Mammary epithelial cell (primary cell): ENCODE measurements at regions of chr13 and their contacts with region 1.

Region 1: DNA sequence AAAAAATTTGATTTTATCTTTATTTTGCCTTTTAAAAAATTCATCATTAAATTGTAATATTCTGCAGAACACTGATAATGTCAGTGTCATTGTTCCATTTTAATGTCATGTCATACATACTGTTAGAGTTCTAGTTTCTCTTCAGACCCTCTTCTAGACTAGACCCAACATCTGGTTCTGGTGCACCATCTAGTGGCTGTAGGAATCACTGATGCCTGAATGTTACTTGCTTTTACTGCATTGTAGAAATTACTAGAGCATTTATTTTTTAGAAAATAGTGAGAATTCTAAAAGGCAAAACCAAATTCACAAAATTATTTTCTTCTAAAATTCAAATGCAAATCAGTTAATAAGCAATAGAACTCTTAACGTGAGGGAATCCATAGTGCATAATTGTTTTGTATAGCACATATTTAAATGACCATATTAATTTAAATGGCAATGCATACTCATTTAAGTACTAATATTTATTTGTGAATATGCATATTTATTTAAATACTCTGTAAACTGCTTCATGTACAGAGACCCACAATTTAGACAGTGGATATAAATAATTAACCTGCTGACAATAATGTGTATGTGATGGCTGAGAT is 425.7 kb downstream of the KLF12 start:
- DNase-seq: peak; percentile 63
- H3K4me3 ChIP-seq: no peak overlapping the region
- H3K27ac ChIP-seq: peak overlapping the region; percentile 42
- H3K4me1 ChIP-seq: no peaks in the 10 kb centered on the region
- H3K27me3 ChIP-seq: no peaks in the 10 kb centered on the region
- CTCF ChIP-seq: peak; percentile 87 to 93

Region 2: GRCh38 chr13:72839831-72840426 is 868.6 kb before region 1 on chr13:
- CTCF ChIA-PET with region 1: no interaction called
- dilution Hi-C with region 1: no loop called
- in situ Hi-C with region 1: loop called (anchors 10 kb)
- intact Hi-C with region 1: loop called (anchors 1 kb)
- DNase-seq: peak; percentile 69
- H3K4me3 ChIP-seq: no peak overlapping the region
- H3K27ac ChIP-seq: peak overlapping the region; percentile 26
- H3K4me1 ChIP-seq: no peaks in the 10 kb centered on the region
- H3K27me3 ChIP-seq: no peaks in the 10 kb centered on the region
- CTCF ChIP-seq: peak; percentile 79 to 86

Region 3: GRCh38 chr13:73081256-73081915 is 627.1 kb before region 1 on chr13:
- CTCF ChIA-PET with region 1: no interaction called
- dilution Hi-C with region 1: no loop called
- in situ Hi-C with region 1: loop called in 1 of 2 experiments (anchors 25 kb)
- intact Hi-C with region 1: loop called (anchors 2 kb)
- DNase-seq: peak; percentile 45
- H3K4me3 ChIP-seq: no peak overlapping the region
- H3K27ac ChIP-seq: peak overlapping the region; percentile 11
- H3K4me1 ChIP-seq: peaks cover 8% of the 10 kb centered on the region
- H3K27me3 ChIP-seq: no peaks in the 10 kb centered on the region
- CTCF ChIP-seq: no peak

Region 4: DNA sequence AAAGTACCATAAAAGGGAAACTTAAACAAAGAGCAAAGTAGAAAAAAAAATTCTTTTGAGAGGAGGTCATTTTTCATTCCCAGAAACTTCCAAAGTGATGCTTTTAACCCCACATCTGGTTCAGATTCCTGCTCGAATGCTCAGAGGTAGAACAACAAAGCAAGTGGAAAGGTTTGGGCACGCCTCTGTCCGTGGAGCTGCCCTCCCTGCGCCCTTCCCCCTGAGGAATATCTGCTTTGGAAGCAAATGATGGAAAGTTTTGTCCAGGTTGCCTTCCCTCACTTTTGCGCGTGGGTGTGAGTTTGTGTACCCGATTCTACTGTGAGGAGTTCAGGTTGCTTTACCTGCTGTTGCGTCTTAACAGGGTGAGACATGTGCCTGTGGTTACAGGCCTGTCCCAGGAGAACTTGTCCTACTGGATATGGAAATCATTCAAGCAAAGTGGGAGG is 539.5 kb before region 1 on chr13:
- CTCF ChIA-PET with region 1: no interaction called
- dilution Hi-C with region 1: no loop called
- in situ Hi-C with region 1: no loop called
- intact Hi-C with region 1: loop called (anchors 1 kb)
- DNase-seq: peak; percentile 94
- H3K4me3 ChIP-seq: no peak overlapping the region
- H3K27ac ChIP-seq: peak overlapping the region; percentile 98
- H3K4me1 ChIP-seq: peaks cover 50% of the 10 kb centered on the region
- H3K27me3 ChIP-seq: no peaks in the 10 kb centered on the region
- CTCF ChIP-seq: no peak

Region 5: GRCh38 chr13:73259061-73260017 is 449.1 kb before region 1 on chr13:
- CTCF ChIA-PET with region 1: no interaction called
- dilution Hi-C with region 1: no loop called
- in situ Hi-C with region 1: no loop called
- intact Hi-C with region 1: no loop called
- DNase-seq: no peak
- H3K4me3 ChIP-seq: no peak overlapping the region
- H3K27ac ChIP-seq: no peak overlapping the region
- H3K4me1 ChIP-seq: peaks cover 29% of the 10 kb centered on the region
- H3K27me3 ChIP-seq: no peaks in the 10 kb centered on the region
- CTCF ChIP-seq: no peak

Region 6: GRCh38 chr13:73428137-73428536 is 280.4 kb before region 1 on chr13:
- CTCF ChIA-PET with region 1: no interaction called
- dilution Hi-C with region 1: no loop called
- in situ Hi-C with region 1: loop called (anchors 10 to 25 kb)
- intact Hi-C with region 1: no loop called
- DNase-seq: peak; percentile 96
- H3K4me3 ChIP-seq: no peak overlapping the region
- H3K27ac ChIP-seq: peak overlapping the region; percentile 98
- H3K4me1 ChIP-seq: peaks cover 31% of the 10 kb centered on the region
- H3K27me3 ChIP-seq: no peaks in the 10 kb centered on the region
- CTCF ChIP-seq: no peak

Region 7: GRCh38 chr13:73492811-73493210 is 215.7 kb before region 1 on chr13:
- CTCF ChIA-PET with region 1: no interaction called
- dilution Hi-C with region 1: no loop called
- in situ Hi-C with region 1: no loop called
- intact Hi-C with region 1: loop called (anchors 5 kb)
- DNase-seq: peak; percentile 11
- H3K4me3 ChIP-seq: no peak overlapping the region
- H3K27ac ChIP-seq: no peak overlapping the region
- H3K4me1 ChIP-seq: peaks cover 14% of the 10 kb centered on the region
- H3K27me3 ChIP-seq: no peaks in the 10 kb centered on the region
- CTCF ChIP-seq: no peak

Region 8: GRCh38 chr13:73635166-73636080 is 73.1 kb before region 1 on chr13:
- CTCF ChIA-PET with region 1: no interaction called
- dilution Hi-C with region 1: no loop called
- in situ Hi-C with region 1: no loop called
- intact Hi-C with region 1: no loop called
- DNase-seq: no peak
- H3K4me3 ChIP-seq: no peak overlapping the region
- H3K27ac ChIP-seq: no peak overlapping the region
- H3K4me1 ChIP-seq: no peaks in the 10 kb centered on the region
- H3K27me3 ChIP-seq: no peaks in the 10 kb centered on the region
- CTCF ChIP-seq: no peak

Region 9: DNA sequence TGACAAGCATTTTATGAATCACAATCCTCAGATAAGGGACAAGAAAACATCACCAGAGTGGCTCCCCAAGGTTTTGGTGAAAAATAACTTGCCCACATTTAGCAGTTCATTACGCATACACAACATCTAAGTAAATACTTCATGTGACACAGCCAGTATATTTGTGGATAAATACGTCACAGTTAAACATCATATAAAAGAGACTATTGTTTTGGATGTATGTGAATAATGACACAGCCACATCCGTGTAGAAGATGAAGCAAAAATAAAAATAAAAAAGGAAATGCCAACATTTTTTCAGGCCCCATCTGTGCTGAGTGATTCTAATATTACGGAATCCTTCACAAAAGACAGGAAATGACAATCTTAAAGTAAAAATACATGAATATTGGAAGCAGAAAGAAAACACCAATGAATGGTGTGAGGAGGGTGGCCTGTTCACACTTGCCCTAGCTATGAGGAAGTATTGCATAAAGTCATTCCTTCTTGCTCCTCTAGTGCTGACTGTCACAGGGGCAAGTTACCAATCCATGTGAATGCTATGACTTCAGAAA is 31.4 kb before region 1 on chr13:
- CTCF ChIA-PET with region 1: no interaction called
- dilution Hi-C with region 1: no loop called
- in situ Hi-C with region 1: no loop called
- intact Hi-C with region 1: no loop called
- DNase-seq: peak; percentile 95
- H3K4me3 ChIP-seq: no peak overlapping the region
- H3K27ac ChIP-seq: peak overlapping the region; percentile 98
- H3K4me1 ChIP-seq: peaks cover 18% of the 10 kb centered on the region
- H3K27me3 ChIP-seq: no peaks in the 10 kb centered on the region
- CTCF ChIP-seq: no peak